GM13977 (cell line): ENCODE measurements at regions of chrX and their contacts with region 1.

Region 1: GRCh38 chrX:109485470-109486340 is 3.8 kb upstream of the GUCY2F start:
- DNase-seq: peak; percentile 37
- CTCF ChIP-seq: peak; percentile 95

Region 2: GRCh38 chrX:109327251-109327650 is 158.5 kb before region 1 on chrX:
- in situ Hi-C with region 1: no loop called
- DNase-seq: no peak
- CTCF ChIP-seq: no peak

Region 3: DNA sequence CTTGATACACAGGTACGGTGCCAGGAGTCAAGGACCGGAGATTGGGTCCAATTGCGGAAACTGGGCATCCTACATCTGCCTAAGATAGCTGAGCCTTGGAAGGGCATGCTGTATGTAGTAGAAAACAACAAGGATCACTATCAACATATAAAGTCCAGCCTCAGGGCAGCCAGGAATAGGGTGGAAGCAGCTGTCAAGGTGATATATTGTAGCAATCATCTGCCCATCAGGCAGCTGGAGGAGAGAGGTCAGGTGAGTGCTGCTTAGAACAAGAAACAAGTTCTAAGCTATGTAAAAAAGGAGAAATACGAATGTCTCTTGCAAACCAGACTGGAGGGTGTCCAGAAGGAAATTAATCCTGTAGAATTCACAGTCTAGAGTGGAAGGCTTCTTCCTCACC is 104.5 kb after region 1 on chrX:
- in situ Hi-C with region 1: no loop called
- DNase-seq: no peak
- CTCF ChIP-seq: no peak

Region 4: DNA sequence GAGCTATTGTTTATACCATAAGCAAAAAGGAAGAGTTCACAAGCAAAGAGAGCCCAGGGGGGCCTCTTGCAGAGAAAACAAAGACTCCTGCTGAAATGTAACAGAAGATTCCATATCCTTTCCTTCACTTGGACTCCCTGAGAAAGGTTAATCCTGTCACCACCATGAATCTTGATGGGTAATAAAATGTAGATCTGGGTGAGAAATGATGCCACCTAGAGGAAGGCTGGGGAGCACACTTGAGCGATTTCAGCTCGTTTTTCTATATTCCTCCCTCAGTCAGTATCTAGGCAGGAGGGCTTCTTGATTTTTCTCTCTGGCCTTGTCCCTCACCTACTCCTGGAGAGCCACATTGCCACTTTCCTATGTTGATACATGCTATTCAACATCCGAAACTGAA is 149.5 kb after region 1 on chrX:
- in situ Hi-C with region 1: loop called (anchors 10 kb)
- DNase-seq: peak; percentile 31
- CTCF ChIP-seq: peak; percentile 50

Region 5: GRCh38 chrX:109886122-109886761 is 400.5 kb after region 1 on chrX:
- in situ Hi-C with region 1: loop called (anchors 10 kb)
- DNase-seq: peak; percentile 54
- CTCF ChIP-seq: peak; percentile 82